BJ (cell line): ENCODE measurements at regions of chr4 and their contacts with region 1.

Region 1: GRCh38 chr4:119628308-119629141 is at the start of gene PDE5A:
- DNase-seq: no peak
- H3K4me3 ChIP-seq: peak within 1 kb of the TSS; percentile 74
- H3K27me3 ChIP-seq: no peaks in the 10 kb centered on the region
- CTCF ChIP-seq: peak; percentile 72
- polyA plus RNA-seq, gene PDE5A: 69.0 and 82.6 TPM in 2 replicates

Region 2: GRCh38 chr4:119559044-119559647 is 69.4 kb before region 1 on chr4:
- CTCF ChIA-PET with region 1: interaction called, 25 read pairs
- POLR2A ChIA-PET with region 1: interaction called, 4 read pairs
- DNase-seq: peak; percentile 22
- H3K4me3 ChIP-seq: no peak overlapping the region
- H3K27me3 ChIP-seq: no peaks in the 10 kb centered on the region
- CTCF ChIP-seq: peak; percentile 29; the same call in 1 of the 2 replicates

Region 3: DNA sequence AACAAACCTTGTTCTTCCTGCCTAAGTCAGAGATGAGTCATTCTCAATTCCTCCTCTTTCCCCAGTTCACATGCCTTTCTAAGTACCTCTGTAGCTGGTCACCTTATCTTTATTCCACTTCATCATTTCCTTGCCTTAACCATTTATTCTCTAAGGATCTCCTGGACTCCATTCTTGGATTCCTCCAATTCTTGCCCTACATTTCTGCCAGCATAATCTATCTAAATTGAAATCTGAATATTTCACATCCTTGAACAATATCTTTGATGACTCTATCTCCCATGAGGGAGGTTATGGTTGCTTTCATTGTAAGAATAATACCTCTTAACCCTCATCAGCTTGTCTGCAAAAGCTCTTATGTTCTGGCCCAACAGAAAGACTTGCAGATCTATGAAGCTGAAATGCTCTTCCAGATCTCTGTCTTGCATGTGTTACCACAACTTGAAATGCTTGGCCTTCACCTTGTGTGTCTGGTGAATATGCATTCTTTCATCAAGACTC is 28.6 kb after region 1 on chr4:
- CTCF ChIA-PET with region 1: interaction called, 17 read pairs
- POLR2A ChIA-PET with region 1: no interaction called
- DNase-seq: no peak
- H3K4me3 ChIP-seq: no peak overlapping the region
- H3K27me3 ChIP-seq: no peaks in the 10 kb centered on the region
- CTCF ChIP-seq: no peak

Region 4: GRCh38 chr4:119729835-119730670 is 101.5 kb after region 1 on chr4:
- CTCF ChIA-PET with region 1: interaction called, 63 read pairs
- POLR2A ChIA-PET with region 1: interaction called, 3 read pairs
- DNase-seq: peak; percentile 72
- H3K4me3 ChIP-seq: no peak overlapping the region
- H3K27me3 ChIP-seq: no peaks in the 10 kb centered on the region
- CTCF ChIP-seq: no peak

Region 5: GRCh38 chr4:120009722-120010121 is 381.2 kb after region 1 on chr4:
- CTCF ChIA-PET with region 1: no interaction called
- POLR2A ChIA-PET with region 1: no interaction called
- DNase-seq: no peak
- H3K4me3 ChIP-seq: no peak overlapping the region
- H3K27me3 ChIP-seq: no peaks in the 10 kb centered on the region
- CTCF ChIP-seq: no peak

Region 6: DNA sequence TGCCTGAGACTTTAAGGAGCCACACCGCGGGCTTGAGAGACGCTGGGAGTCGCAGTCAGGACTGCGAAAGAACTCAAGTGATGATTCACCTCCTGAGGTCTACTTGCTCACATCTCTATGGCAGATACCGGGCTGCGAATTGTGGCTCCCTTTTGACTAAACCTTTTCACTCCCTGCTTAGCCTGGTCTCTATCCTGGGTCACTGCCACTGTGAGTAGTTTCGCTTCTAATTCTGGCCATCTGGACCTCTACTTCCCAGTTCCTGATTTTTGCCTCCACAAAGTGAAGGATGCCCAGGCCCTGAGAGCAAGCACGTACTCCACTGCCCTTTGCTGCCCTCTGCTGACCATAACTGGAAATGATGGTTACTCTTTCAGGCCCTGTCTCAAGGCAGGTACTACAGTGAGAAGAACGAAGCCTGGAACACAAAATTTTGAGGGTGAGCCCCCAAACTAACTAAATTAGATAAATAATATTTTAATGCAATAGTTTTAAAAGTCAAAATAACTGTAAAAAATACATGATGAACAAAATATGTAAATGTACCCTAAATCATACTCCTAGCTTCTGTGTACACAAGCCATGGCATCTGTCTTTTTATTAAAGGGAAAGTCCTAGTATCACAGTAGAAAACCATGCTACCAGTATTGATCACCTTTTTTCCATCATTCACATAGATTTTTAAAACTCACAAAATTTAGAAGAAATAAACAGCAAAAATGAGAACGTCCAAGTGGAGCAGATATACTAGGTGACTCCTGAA is 421.4 kb after region 1 on chr4:
- CTCF ChIA-PET with region 1: interaction called, 64 read pairs
- POLR2A ChIA-PET with region 1: no interaction called
- DNase-seq: peak; percentile 67
- H3K4me3 ChIP-seq: peak overlapping the region; percentile 31
- H3K27me3 ChIP-seq: no peaks in the 10 kb centered on the region
- CTCF ChIP-seq: peak; percentile 80